Aorta (tissue), 5 donors: ENCODE measurements at regions of chr3 and their contacts with region 1.

Region 1: GRCh38 chr3:47612178-47612577 is 33.5 kb upstream of the CSPG5 start:
- DNase-seq: no peak
- ATAC-seq: peak; percentile 76
- H3K4me3 ChIP-seq: no peak overlapping the region
- H3K27ac ChIP-seq: no peak overlapping the region
- H3K4me1 ChIP-seq: peaks cover 0 to 10% of the 10 kb centered on the region in 2 donors
- H3K27me3 ChIP-seq: no peaks in the 10 kb centered on the region

Region 2: DNA sequence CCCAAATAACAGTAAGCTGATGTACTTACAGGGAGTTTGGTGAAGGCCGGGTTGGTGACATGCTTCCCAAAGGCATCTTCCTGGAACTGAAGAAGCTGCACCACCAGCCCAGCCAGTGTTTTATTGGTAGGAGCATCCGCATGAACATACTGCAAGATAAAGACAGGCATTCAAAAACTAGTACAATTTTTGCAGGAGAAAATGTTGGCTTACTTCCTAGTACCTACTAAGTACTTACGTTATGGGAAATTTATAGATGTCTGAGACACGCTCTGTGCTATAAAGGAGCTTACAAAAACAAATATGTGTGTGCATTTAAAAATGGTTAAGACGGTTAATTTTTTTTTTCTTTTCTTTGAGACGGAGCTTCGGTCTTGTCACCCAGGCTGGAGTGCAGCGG is 160.6 kb after region 1 on chr3:
- intact Hi-C with region 1: no loop called
- DNase-seq: no peak
- ATAC-seq: no peak
- H3K4me3 ChIP-seq: no peak overlapping the region
- H3K27ac ChIP-seq: no peak overlapping the region
- H3K4me1 ChIP-seq: no peaks in the 10 kb centered on the region
- H3K27me3 ChIP-seq: no peaks in the 10 kb centered on the region

Region 3: GRCh38 chr3:47802734-47803477 is 190.7 kb after region 1 on chr3 and contains the start of gene DHX30:
- intact Hi-C with region 1: loop called in 1 of 2 experiments (anchors 5 kb)
- DNase-seq: peak; percentile 93 to 96
- ATAC-seq: peak; percentile 96
- H3K4me3 ChIP-seq: peak within 1 kb of the TSS; percentile 76 to 88
- H3K27ac ChIP-seq: peak within 1 kb of the TSS; percentile 77 to 96
- H3K4me1 ChIP-seq: peaks cover 0 to 2% of the 10 kb centered on the region in 2 donors
- H3K27me3 ChIP-seq: no peaks in the 10 kb centered on the region
- total RNA-seq, gene DHX30: 47.6 to 53.6 TPM